G401 (cell line): ENCODE measurements at regions of chr6 and their contacts with region 1.

Region 1: DNA sequence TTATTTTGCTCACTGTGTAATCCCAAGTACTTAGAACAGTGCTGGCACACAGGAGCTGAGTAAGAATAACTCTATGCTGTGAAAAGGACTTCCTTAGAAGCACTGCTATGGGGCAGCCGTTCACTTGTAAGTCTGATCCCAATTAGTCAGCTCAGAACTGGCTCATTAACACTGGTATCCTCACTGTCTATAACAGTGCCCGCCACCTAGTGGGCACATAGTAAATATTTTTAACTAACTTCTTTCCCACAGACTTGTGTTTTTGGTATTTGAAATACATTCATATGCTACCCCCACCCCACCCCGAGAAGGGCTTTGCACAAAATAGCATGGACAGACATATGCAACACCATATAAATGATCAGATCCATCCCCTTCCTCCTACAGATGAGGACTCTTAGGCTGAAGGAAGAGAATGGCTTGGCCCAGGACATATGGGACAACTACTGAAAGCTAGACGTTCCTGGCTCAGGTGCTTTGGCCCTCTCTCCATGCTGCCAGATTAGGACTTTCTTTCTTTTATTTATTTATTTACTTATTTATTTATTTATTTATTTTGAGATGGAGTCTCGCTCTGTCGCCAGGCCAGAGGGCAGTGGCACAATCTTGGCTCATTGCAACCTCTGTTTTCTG is 47.1 kb downstream of the DST start:
- DNase-seq: peak; percentile 73

Region 2: DNA sequence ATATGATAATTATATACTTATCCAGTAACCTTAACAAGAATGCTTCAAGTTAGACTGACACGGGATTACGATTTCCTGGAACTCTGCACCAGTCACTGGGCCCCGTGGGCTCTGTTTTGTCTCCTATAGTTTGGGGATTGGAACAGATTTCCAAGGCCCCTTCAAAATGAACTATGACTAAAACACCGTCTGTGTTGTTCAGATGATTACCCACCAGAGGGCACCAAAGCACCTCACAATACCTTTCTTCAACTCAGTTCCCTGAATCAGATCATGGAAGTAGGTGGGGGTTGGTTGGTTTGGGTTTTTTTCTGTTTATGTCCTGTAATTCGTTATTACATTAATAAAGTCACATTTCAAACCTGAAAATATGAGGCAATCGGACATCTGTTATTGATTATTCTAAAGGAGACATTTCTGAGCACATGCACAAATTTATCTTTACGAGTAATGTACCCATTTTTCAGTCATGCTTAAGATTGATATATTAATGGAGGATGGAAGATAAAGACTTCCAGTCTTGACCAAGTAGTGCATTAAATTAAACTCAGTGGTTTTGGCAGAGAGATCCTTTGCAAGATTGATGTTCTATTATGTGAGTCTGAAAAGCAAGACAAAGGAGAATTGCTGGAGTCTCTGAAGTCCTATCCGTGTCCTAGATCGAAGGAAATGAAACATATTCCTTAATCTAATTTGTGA is 236.3 kb before region 1 on chr6:
- in situ Hi-C with region 1: loop called (anchors 25 kb)
- DNase-seq: peak; percentile 84

Region 3: GRCh38 chr6:56699066-56699654 is 103.6 kb after region 1 on chr6:
- in situ Hi-C with region 1: no loop called
- DNase-seq: peak; percentile 62